ENCODE measurements at regions of chr11 and their contacts with region 1.

Region 1: DNA sequence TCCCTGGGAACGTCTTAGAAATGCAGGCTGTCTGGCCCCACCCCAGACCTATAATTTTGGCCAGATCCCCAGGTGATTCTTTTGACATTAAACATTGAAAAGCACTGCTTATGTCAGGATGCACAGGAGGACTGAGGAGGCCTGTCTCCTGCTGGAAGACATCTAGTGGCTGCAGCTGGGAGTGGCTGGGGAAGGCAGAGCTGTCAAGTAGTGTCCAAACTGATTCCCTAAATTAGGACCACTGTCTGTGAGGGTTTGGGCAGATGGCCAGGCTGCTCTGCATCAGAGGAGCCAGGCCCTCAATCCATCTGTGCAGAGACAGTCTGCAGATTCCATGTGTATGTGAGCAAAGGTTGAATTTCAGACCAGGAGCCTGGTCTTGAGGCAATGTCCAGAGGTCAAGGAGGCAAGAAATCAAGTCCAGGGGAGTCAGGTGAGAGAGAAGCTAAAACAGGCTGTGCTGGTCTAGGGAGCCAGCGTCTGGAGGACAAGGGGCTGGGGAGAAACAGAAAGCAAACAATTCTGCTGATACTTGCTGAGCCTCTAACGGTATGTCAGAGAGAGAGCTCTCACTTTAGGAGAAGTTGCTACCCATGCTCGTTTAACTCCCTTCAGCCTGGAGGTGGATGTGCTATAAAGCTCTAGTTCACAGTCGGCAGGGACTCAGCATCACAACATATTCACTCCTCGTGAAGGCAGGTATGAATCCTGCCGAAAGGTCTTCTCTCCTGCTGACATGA is 15.3 kb upstream of the SYTL2 start:
- DNase-seq: no peak
- H3K4me3 Mint-ChIP-seq: peak overlapping the region; percentile 1
- H3K27ac Mint-ChIP-seq: peak overlapping the region; percentile 87
- H3K4me1 Mint-ChIP-seq: peaks cover 74% of the 10 kb centered on the region
- H3K27me3 Mint-ChIP-seq: no peaks in the 10 kb centered on the region

Region 2: GRCh38 chr11:85464283-85464682 is 362.0 kb before region 1 on chr11:
- intact Hi-C with region 1: no loop called
- DNase-seq: no peak
- H3K4me3 Mint-ChIP-seq: no peak overlapping the region
- H3K27ac Mint-ChIP-seq: no peak overlapping the region
- H3K4me1 Mint-ChIP-seq: no peaks in the 10 kb centered on the region
- H3K27me3 Mint-ChIP-seq: no peaks in the 10 kb centered on the region

Region 3: DNA sequence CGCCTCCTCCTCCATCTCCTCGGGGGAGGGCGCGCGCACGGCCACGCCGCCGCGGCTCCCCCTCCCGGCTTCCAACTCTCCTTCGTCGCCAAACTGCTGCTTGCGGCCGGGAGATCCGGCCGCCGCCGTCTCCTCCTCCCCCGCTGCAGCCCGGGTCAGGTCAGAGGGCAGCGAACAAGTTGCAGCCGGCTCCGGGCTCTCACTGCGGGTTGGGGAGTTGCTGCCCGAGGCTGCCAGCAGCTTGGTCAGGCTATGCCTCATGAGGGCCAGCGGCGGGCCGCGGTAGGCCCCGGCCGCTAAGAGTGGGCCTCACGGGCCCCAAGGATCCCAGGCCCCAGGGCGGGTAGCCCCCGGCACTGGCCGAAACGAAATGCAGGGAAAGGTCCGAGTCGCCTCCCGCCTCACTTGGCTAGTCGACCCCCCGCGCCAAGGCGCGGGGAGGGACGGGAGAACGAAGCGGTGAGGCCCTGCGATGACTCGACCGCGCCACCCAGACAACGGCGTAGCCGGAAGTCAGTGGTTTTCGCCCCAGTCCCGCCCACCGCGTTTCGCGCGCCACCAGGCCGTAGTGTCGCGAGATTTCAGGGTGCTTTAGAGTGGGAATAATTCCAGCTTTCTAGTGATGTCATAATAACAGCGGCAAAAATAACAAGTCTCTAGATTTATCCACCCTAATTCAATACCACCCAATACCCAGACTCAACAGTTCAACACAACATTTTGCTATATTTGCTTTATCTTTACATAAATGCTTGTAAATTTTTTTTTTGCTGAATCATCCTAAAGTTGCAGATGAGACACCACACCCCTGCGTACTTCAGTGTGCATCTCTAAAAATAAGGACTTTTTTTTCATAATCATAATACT is 161.4 kb before region 1 on chr11 and contains the start of gene CREBZF:
- intact Hi-C with region 1: loop called (anchors 1 kb)
- DNase-seq: peak; percentile 94
- H3K4me3 Mint-ChIP-seq: peak within 1 kb of the TSS; percentile 99
- H3K27ac Mint-ChIP-seq: peak within 1 kb of the TSS; percentile 97
- H3K4me1 Mint-ChIP-seq: peaks cover 51% of the 10 kb centered on the region
- H3K27me3 Mint-ChIP-seq: no peaks in the 10 kb centered on the region
- total RNA-seq, gene CREBZF: 52.0 and 55.9 TPM in 2 replicates

Region 4: DNA sequence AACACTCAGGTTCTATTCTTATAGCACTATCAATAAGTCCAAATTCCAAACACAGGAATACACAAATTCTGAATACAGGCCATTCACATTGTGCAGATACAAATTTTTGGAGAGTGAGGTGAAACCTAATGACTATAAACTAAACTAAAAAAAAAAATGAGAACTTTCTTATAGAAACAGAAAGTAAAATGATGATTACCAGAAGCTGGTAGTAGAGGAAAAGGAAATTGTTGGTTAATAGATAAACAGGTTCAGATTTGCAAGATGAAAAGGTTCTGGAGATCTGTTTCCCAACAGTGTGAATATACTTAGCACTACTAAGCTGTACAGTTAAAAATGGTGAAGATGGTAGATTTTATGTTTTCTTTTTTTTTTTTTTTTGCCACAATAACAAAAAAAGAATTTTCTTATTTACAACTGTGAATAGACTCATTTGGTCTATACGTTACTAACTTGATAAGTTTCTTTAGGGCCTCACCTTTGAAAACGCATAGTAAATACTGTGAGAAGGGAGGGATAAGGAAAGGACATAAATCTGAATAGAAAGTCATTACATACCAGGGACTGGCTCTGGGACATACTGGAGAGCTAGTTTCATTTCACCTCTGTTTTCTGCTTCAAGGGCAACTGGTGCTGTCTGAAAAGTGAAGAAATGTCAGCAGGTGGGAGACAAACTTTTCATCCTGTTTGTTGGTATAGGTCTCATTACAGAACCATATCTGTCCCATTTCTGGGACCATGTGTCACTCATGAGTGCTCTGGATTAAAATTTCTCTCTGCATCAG is 126.1 kb before region 1 on chr11:
- intact Hi-C with region 1: loop called (anchors 1 kb)
- DNase-seq: no peak
- H3K4me3 Mint-ChIP-seq: peak overlapping the region; percentile 45
- H3K27ac Mint-ChIP-seq: peak overlapping the region; percentile 78
- H3K4me1 Mint-ChIP-seq: peaks cover 49% of the 10 kb centered on the region
- H3K27me3 Mint-ChIP-seq: no peaks in the 10 kb centered on the region

Region 5: DNA sequence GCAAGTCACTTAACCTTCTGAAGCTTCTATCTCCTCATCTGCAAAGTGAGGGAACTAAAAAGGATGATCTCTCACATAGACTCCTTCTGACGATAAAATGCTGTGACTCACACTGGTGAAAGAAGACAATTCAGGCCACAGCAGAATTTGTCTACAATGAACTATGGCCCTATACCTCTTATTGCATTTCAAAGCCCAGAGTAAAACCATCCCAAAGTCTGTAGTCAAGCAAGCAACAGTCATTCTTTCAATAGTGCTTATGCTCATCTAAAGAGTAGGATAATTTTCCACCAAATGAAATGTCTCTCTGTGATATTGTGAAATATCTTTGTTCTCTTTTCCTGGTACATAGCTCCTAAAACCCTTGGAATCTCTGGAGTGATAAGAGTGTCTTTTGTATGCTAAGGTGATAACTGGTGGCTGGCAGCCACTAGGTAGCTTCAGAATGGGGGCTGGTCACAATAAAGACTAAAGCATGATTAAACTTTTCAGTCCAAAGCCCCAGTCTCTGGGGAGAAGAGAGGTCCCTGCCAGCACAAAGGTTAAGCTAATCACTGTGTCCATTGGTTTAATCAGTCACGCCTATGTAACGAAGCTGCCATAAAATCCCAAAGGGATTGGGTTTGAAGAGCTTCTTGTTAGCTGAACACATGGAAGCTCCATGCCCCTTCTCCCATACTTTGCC is 46.2 kb before region 1 on chr11:
- intact Hi-C with region 1: loop called (anchors 1 kb)
- DNase-seq: no peak
- H3K4me3 Mint-ChIP-seq: no peak overlapping the region
- H3K27ac Mint-ChIP-seq: no peak overlapping the region
- H3K4me1 Mint-ChIP-seq: peaks cover 61% of the 10 kb centered on the region
- H3K27me3 Mint-ChIP-seq: no peaks in the 10 kb centered on the region

Region 6: GRCh38 chr11:85810871-85811611 is 15.2 kb before region 1 on chr11 and contains the start of gene SYTL2:
- intact Hi-C with region 1: loop called (anchors 1 kb)
- DNase-seq: peak; percentile 83
- H3K4me3 Mint-ChIP-seq: peak within 1 kb of the TSS; percentile 94
- H3K27ac Mint-ChIP-seq: peak within 1 kb of the TSS; percentile 85
- H3K4me1 Mint-ChIP-seq: peaks cover 52% of the 10 kb centered on the region
- H3K27me3 Mint-ChIP-seq: no peaks in the 10 kb centered on the region
- total RNA-seq, gene SYTL2: 37.1 and 38.7 TPM in 2 replicates

Region 7: DNA sequence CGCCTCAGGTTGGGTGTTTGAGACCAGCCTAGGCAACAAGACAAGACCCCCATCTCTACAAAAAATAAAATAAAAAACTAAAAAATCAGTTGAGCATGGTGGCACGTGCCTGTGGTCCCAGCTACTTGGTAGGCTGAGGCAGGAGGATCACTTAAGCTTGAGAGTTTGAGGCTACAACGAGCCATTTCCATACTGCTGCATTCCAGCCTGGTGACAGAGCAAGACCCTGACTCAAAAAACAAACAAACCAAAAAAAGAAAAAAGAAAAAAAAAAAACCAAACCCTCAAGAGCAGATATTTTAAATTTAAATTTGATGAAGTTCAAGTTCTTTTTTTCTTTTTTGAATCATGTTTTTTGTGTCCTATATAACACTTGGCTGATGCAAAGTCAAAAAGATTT is 21.7 kb after region 1 on chr11:
- intact Hi-C with region 1: no loop called
- DNase-seq: no peak
- H3K4me3 Mint-ChIP-seq: no peak overlapping the region
- H3K27ac Mint-ChIP-seq: no peak overlapping the region
- H3K4me1 Mint-ChIP-seq: peaks cover 15% of the 10 kb centered on the region
- H3K27me3 Mint-ChIP-seq: no peaks in the 10 kb centered on the region